CD14-positive monocyte (primary cell): ENCODE measurements at regions of chr5 and their contacts with region 1.

Region 1: GRCh38 chr5:59371525-59372127 is 521.9 kb downstream of the PDE4D start:
- DNase-seq: no peak
- H3K4me3 ChIP-seq: no peak overlapping the region
- H3K4me3 Mint-ChIP-seq: no peak overlapping the region
- H3K27ac ChIP-seq: no peak overlapping the region
- H3K27ac Mint-ChIP-seq: no peak overlapping the region
- H3K4me1 ChIP-seq: no peaks in the 10 kb centered on the region
- H3K4me1 Mint-ChIP-seq: peaks cover 2% of the 10 kb centered on the region
- H3K27me3 ChIP-seq: no peaks in the 10 kb centered on the region
- H3K27me3 Mint-ChIP-seq: peaks cover 0 to 1% (median 0%) of the 10 kb centered on the region in 3 donors
- CTCF ChIP-seq: no peak

Region 2: DNA sequence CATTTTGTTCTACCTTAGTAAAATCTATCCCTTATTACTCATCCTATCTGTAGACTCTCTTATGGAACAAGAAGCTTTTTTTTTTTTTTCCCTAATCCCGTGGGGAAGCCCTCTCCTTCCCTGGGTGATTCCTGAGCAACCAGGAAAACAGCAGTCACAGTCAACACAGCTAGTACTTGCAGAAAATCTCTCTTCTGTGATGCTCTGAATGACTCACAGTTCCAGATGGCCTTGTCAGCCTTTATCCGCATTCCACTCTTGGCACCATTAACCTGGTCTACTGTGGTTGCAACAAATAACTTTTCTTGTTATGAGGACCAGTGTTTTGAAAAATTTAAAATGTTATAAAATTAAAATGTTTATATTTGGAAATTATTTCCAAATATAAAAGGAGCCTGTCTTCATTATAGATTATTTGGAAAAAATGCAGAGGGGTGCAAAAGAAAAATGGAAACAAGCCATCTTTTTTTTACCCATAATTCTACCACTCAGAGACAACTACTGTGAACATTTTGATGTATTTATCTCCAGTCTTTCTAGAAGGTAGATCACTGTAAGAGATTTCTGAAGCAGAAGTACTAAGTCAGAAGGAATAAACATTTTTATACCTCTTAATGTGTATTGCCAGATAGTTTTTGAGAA is 302.1 kb before region 1 on chr5:
- intact Hi-C with region 1: no loop called
- DNase-seq: no peak
- H3K4me3 ChIP-seq: no peak overlapping the region
- H3K4me3 Mint-ChIP-seq: no peak overlapping the region
- H3K27ac ChIP-seq: no peak overlapping the region
- H3K27ac Mint-ChIP-seq: no peak overlapping the region
- H3K4me1 ChIP-seq: no peaks in the 10 kb centered on the region
- H3K4me1 Mint-ChIP-seq: no peaks in the 10 kb centered on the region
- H3K27me3 ChIP-seq: no peaks in the 10 kb centered on the region
- H3K27me3 Mint-ChIP-seq: peaks cover 0 to 2% (median 1%) of the 10 kb centered on the region in 3 donors
- CTCF ChIP-seq: no peak

Region 3: DNA sequence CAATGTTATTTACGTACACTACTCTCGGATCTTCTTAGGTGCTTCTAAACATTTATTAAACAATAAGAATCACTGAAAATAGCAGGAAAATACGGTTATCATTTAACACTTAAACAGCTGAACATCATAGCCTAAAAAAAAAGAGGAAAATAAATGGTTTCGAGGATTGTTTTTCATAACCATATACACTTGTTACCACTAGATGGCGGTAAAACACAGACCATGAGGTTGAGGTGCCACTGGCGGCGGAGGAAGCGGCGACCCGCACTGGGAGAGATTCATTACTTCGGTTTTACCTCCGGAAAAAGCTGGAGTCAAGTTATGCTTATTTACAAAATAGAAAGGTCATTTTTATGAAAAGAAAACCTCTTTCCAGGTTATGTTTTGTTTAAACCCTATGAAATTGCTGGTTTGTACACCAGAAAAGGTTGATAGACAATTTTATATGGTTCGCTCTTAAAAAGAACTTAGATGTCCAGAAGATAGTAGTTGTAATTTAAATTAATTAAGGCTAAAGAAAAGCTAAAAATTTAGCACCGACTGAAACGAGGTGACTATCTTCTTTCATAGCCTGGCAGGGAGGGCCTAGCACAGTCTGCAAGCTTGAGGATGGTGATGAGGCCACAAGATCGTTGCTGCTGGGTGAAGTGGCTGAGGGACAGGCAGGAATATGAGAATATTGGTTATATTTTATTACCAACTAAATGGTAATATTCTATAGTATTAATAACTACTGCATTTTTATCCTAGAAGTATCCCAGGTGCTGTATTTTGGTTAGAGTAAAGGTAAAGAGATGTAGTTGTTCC is 183.0 kb before region 1 on chr5:
- intact Hi-C with region 1: loop called in 1 of 2 experiments (anchors 5 kb)
- DNase-seq: peak; percentile 37 to 71 (median 67)
- H3K4me3 ChIP-seq: peak overlapping the region in 1 of 3 experiments; percentile 13
- H3K4me3 Mint-ChIP-seq: peak overlapping the region in 1 of 2 donors; percentile 22
- H3K27ac ChIP-seq: no peak overlapping the region
- H3K27ac Mint-ChIP-seq: no peak overlapping the region
- H3K4me1 ChIP-seq: peaks cover 0 to 3% of the 10 kb centered on the region in 2 donors
- H3K4me1 Mint-ChIP-seq: peaks cover 6% of the 10 kb centered on the region
- H3K27me3 ChIP-seq: peaks cover 0 to 3% of the 10 kb centered on the region in 2 donors
- H3K27me3 Mint-ChIP-seq: peaks cover 0 to 6% (median 3%) of the 10 kb centered on the region in 3 donors
- CTCF ChIP-seq: peak; percentile 85

Region 4: DNA sequence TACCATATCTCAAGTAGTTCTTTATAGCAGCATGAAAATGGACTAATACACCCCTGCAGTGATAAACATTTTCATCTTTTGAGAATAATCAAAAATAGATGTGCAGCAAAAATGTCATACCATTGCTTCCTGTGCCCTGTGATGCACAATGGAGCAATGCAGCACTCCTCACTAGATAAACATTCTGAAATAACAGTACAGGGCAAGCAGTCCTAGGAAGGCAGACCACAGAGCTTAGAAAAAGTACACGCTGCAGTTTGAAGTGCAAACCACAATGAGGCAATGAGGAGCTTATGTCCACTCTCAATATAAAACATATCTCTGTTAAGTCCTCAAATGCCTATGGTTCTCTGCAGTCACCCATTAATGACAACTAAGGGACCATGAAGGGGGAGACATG is 154.3 kb after region 1 on chr5:
- intact Hi-C with region 1: no loop called
- DNase-seq: no peak
- H3K4me3 ChIP-seq: no peak overlapping the region
- H3K4me3 Mint-ChIP-seq: no peak overlapping the region
- H3K27ac ChIP-seq: no peak overlapping the region
- H3K27ac Mint-ChIP-seq: no peak overlapping the region
- H3K4me1 ChIP-seq: peaks cover 0 to 4% of the 10 kb centered on the region in 2 donors
- H3K4me1 Mint-ChIP-seq: no peaks in the 10 kb centered on the region
- H3K27me3 ChIP-seq: no peaks in the 10 kb centered on the region
- H3K27me3 Mint-ChIP-seq: no peaks in the 10 kb centered on the region
- CTCF ChIP-seq: no peak